ENCODE measurements at regions of chr18 and their contacts with region 1.

Region 1: GRCh38 chr18:62982600-62983251 is 267.4 kb downstream of the PHLPP1 start:
- DNase-seq: peak; percentile 24 to 25
- ATAC-seq: peak; percentile 77 to 86
- H3K4me3 ChIP-seq: peak overlapping the region in 3 of 4 donors; percentile 15 to 39 (median 34)
- H3K27ac ChIP-seq: no peak overlapping the region
- H3K4me1 ChIP-seq: no peaks in the 10 kb centered on the region
- H3K27me3 ChIP-seq: no peaks in the 10 kb centered on the region
- CTCF ChIP-seq: peak; percentile 62 to 78 (median 74)
- POLR2A ChIP-seq: no peak

Region 2: DNA sequence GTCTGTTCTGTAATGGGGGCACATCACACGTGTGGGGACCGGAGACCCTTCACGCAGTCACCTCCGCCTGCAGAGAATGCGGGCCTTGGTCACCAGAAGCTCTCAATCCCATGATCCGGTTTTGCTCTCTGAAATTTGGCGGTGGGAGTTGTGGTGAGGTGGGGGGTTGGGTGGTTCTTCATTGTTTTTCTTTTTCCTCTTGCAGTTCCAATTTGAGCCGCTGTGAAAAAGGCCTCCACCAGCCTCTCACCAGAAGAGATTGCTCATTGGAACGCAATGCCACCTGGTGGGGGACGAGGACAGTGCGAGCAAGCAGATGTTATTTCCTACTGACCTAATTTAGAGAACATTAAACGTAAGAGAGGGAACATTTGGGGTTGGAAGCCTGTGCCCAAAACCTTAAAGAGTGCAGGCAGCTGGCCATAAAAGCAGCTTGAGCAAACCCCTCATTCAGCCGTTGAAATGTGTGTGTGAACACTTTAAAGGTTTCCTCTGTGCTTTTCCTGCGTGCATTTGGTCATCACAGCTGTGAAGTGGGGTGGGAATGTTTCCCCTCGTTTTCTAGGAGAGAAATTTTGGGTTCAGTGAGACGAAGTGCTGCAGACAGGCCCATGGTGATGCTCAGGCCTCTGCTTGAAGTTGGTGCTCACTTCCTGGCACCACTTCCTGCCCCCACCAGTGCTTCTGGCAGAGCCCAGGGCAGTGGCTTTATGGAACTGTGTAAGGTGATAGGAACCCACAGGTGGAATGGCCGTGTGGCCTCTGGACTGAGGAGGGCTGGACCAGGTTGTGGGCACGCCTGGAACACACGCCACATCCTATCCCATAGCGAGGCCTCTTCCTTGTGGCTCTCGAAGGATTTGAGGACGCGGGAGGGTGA is 398.2 kb before region 1 on chr18:
- in situ Hi-C with region 1: loop called (anchors 10 to 25 kb)
- intact Hi-C with region 1: loop called (anchors 1 kb)
- DNase-seq: peak; percentile 78 to 83
- ATAC-seq: peak; percentile 90 to 95
- H3K4me3 ChIP-seq: peak overlapping the region in 2 of 4 donors; percentile 30 to 35
- H3K27ac ChIP-seq: peak overlapping the region; percentile 63 to 70 (median 64)
- H3K4me1 ChIP-seq: peaks cover 11 to 13% of the 10 kb centered on the region in 2 donors
- H3K27me3 ChIP-seq: no peaks in the 10 kb centered on the region
- CTCF ChIP-seq: peak; percentile 95 to 99 (median 97)
- POLR2A ChIP-seq: no peak

Region 3: GRCh38 chr18:62637807-62638687 is 344.7 kb before region 1 on chr18:
- in situ Hi-C with region 1: no loop called
- intact Hi-C with region 1: loop called (anchors 5 kb)
- DNase-seq: no peak
- ATAC-seq: no peak
- H3K4me3 ChIP-seq: no peak overlapping the region
- H3K27ac ChIP-seq: no peak overlapping the region
- H3K4me1 ChIP-seq: no peaks in the 10 kb centered on the region
- H3K27me3 ChIP-seq: no peaks in the 10 kb centered on the region
- CTCF ChIP-seq: peak in 3 of 5 experiments; percentile 32 to 52 (median 45)
- POLR2A ChIP-seq: no peak

Region 4: DNA sequence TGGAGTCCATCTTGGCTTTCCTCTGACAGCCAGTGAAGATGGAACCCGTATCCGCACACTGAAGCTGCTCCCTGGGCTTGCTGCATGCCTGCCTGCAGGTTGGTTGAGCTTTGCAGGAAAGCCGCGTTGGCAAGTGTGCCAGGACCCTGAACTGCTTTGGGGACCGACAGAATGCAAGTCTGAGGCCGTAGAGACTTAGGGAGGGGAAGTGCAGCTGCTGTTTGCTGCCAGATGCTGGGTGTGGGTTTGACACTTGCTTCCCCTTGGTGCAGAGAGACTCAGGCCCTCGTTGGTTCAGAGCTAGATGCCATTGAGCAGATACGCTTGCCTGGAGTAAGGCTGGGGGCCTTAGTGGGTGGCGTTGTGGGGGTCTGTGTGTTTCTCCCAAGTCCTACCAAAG is 280.5 kb before region 1 on chr18:
- in situ Hi-C with region 1: loop called in 3 of 4 experiments (anchors 10 to 25 kb)
- intact Hi-C with region 1: no loop called
- DNase-seq: no peak
- ATAC-seq: no peak
- H3K4me3 ChIP-seq: no peak overlapping the region
- H3K27ac ChIP-seq: no peak overlapping the region
- H3K4me1 ChIP-seq: no peaks in the 10 kb centered on the region
- H3K27me3 ChIP-seq: no peaks in the 10 kb centered on the region
- CTCF ChIP-seq: no peak
- POLR2A ChIP-seq: no peak